Panc1 (cell line): ENCODE measurements at regions of chr16 and their contacts with region 1.

Region 1: DNA sequence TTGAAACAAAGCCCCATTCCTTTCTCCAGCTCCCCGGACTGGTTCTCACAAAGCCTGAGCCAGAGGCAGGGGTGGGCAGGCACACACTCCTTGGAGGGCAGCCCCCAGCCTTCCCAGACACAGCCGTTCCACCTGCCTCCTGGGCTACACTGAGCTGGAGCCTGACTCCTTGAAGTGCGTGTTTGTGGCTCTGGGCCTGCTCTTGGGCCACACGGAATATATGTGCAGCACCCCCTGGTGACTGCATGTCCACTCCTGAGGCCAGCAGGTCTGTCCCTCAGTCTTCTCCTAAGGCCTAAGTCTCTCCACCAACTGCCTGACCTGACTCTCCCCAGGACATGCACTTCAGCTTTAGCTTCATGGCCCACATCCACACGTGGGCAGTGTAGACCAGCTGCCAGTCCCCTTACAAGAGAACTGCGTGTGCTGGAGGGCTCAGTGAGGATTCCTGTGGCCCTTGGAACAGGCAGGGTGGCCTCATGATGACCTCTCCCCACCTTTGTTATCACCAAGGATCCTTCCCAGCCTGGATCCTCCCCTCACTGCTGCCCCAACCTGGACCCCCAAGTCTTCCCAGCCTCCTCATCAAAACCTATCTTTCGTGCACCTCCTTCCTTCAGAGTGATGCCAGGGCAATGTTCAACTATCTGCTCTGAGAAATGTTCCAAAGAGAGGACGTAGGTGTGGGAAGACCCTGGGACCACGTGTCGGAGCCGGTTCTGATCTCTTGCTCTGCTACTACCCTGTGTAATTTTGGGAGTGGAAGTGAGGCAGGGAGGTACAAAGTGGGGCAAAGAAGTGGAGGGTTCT is 12.4 kb upstream of the SLC6A2 start:
- DNase-seq: no peak
- ATAC-seq: no peak; the same call in 1 of the 2 replicates
- H3K4me3 ChIP-seq: no peak overlapping the region
- H3K27ac ChIP-seq: no peak overlapping the region
- H3K4me1 ChIP-seq: no peaks in the 10 kb centered on the region
- H3K27me3 ChIP-seq: no peaks in the 10 kb centered on the region
- CTCF ChIP-seq: peak; percentile 29

Region 2: GRCh38 chr16:55836158-55836611 is 192.8 kb after region 1 on chr16:
- CTCF ChIA-PET with region 1: no interaction called
- POLR2A ChIA-PET with region 1: interaction called, 12 read pairs
- in situ Hi-C with region 1: no loop called
- intact Hi-C with region 1: no loop called
- DNase-seq: no peak
- ATAC-seq: no peak
- H3K4me3 ChIP-seq: no peak overlapping the region
- H3K27ac ChIP-seq: no peak overlapping the region
- H3K4me1 ChIP-seq: no peaks in the 10 kb centered on the region
- H3K27me3 ChIP-seq: no peaks in the 10 kb centered on the region
- CTCF ChIP-seq: no peak